Heart left ventricle (tissue), 16 donors: ENCODE measurements at regions of chr5 and their contacts with region 1.

Region 1: GRCh38 chr5:81851481-81852178 is 100.7 kb upstream of the SSBP2 start:
- DNase-seq: peak; percentile 96 to 98 (median 97)
- ATAC-seq: peak; percentile 93 to 96 (median 94)
- H3K4me3 ChIP-seq: peak overlapping the region in 11 of 12 donors; percentile 23 to 71 (median 56)
- H3K27ac ChIP-seq: peak overlapping the region; percentile 80 to 99 (median 92)
- H3K4me1 ChIP-seq: peaks cover 0 to 79% (median 47%) of the 10 kb centered on the region in 12 donors
- H3K27me3 ChIP-seq: no peaks in the 10 kb centered on the region
- CTCF ChIP-seq: no peak
- POLR2A ChIP-seq: peak in 1 of 2 donors; percentile 58

Region 2: GRCh38 chr5:81513982-81514381 is 337.6 kb before region 1 on chr5:
- intact Hi-C with region 1: loop called in 7 of 10 experiments (anchors 2 to 10 kb)
- DNase-seq: no peak
- ATAC-seq: no peak
- H3K4me3 ChIP-seq: no peak overlapping the region
- H3K27ac ChIP-seq: no peak overlapping the region
- H3K4me1 ChIP-seq: no peaks in the 10 kb centered on the region
- H3K27me3 ChIP-seq: no peaks in the 10 kb centered on the region
- CTCF ChIP-seq: peak in 7 of 12 donors; percentile 13 to 37 (median 22)
- POLR2A ChIP-seq: no peak

Region 3: DNA sequence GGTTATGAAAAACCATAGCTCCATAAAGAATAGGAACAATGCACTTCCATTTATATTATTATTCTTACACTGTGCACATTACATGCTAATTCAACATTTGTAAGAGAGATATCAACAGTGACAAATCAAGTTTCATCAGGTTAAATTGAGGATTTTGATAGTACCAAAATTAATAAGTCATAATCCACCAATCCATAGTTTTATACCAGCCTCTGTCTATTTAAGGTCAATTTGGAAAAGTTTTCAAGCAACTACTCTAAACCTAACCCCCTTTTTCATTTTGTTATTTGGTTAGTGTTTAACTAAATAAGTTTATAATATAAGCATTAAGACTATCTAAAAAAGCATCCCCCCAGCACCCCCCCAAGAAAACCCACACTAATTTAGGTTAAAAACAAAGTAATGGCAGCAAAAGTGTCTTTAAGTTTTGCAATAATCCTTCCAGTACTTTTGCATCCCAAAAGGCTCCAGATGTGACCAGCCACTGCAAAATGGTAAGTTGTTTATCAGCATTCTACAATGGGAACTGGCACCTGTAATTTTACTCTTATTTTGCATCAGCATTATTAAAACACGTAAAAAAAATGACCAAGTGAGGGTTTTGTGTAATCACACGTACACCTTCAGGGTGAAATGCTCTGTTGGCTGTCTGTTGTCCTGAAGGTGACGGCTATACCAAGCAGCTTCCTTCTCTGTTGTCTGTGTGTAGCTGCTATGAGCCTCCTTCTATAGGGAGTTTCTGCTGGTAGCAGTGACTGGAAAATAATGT is 64.0 kb before region 1 on chr5:
- intact Hi-C with region 1: loop called (anchors 1 to 5 kb)
- DNase-seq: peak in 4 of 5 donors; percentile 53 to 78 (median 66)
- ATAC-seq: peak; percentile 60 to 72 (median 63)
- H3K4me3 ChIP-seq: peak overlapping the region in 3 of 12 donors; percentile 4 to 30 (median 20)
- H3K27ac ChIP-seq: peak overlapping the region in 9 of 12 donors; percentile 11 to 42 (median 21)
- H3K4me1 ChIP-seq: peaks cover 0 to 30% (median 19%) of the 10 kb centered on the region in 12 donors
- H3K27me3 ChIP-seq: no peaks in the 10 kb centered on the region
- CTCF ChIP-seq: no peak
- POLR2A ChIP-seq: no peak

Region 4: DNA sequence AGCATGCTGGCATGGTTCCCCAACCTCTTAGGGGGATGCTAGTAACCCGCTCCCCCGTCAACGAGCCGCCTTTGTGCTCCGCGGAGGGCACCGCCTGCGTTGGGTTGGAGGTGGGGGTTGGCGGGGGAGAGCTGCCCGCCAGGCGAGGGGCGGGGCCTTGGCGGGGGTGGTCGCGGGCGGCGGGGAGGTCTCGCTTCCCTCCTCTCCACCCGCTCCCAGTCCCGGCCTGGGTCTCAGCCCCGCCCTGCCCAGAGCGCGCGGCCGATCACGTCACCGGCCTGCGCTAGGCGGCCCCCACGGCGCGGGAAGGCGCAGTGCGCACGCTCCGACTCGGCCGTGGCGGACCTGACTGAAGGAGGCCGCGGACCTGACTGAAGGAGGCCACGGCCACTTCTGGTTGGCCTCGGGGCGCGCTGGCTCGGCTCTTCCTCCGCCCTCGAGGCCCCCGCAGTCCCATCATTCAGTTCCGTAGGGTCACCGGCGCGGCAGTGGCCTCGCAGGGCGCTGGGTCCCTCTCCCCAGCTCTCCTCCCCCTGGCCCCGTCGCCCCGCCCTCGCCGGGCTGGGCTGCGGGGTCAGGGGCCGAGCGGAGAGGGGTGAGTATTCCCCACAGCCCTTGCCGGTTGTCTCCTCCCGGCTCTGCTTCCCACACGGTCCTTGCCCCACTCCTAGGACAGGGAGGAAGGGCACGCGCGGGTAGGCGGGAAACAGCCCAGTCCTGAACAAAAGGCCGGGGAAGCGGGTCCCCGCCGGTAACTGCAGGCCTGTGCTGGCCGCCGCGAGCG is 120.3 kb after region 1 on chr5 and contains the start of gene ATG10:
- intact Hi-C with region 1: loop called in 9 of 10 experiments (anchors 2 to 10 kb)
- DNase-seq: peak; percentile 93 to 97 (median 94)
- ATAC-seq: peak; percentile 96 to 100 (median 99)
- H3K4me3 ChIP-seq: peak within 1 kb of the TSS; percentile 57 to 92 (median 73)
- H3K27ac ChIP-seq: peak within 1 kb of the TSS; percentile 91 to 100 (median 98)
- H3K4me1 ChIP-seq: peaks cover 0 to 15% (median 6%) of the 10 kb centered on the region in 12 donors
- H3K27me3 ChIP-seq: no peaks in the 10 kb centered on the region
- CTCF ChIP-seq: no peak
- POLR2A ChIP-seq: peak; percentile 70 to 98
- total RNA-seq, gene ATG10: 2.7 to 10.7 (median 6.3) TPM